Activated CD8-positive, alpha-beta T cell treated with anti-CD3 and anti-CD28 coated beads for 36 hours (primary cell): ENCODE measurements at regions of chr15 and their contacts with region 1.

Region 1: GRCh38 chr15:89880721-89881120 is 13.1 kb downstream of the AP3S2 start:
- DNase-seq: no peak
- ATAC-seq: no peak
- H3K4me3 Mint-ChIP-seq: no peak overlapping the region
- H3K27ac Mint-ChIP-seq: peak overlapping the region; percentile 17
- H3K4me1 Mint-ChIP-seq: no peaks in the 10 kb centered on the region
- H3K27me3 Mint-ChIP-seq: no peaks in the 10 kb centered on the region
- CTCF ChIP-seq: no peak

Region 2: DNA sequence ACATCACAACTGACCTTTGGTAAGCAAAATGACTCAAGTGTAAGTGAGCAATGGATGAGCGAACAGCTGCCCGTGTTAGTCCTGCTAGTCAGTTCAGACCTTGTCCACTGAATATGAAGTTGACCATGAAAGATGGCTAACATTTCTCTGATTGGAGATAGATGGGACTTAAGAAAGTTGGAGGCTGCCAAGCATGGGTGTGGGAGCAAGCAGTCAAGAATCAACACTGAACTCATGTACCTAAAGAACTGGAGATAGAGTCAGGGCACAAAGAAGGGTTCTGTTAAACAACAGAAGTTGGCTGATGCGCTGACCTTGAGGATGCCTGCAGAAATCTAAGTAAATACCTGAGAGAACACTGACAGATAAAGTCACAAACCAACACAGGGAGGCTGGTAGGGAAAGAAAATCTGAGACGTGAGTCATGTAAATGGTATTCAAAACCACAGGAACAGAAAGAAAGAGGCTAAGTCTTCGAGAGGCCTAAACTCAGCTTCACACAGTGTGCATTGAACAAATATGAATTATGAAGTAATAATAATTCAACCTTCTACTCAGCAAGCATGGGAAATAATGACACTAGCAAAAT is 35.3 kb before region 1 on chr15:
- CTCF ChIA-PET with region 1: interaction called, 15 read pairs
- POLR2A ChIA-PET with region 1: no interaction called
- intact Hi-C with region 1: loop called (anchors 5 kb)
- DNase-seq: no peak
- ATAC-seq: no peak
- H3K4me3 Mint-ChIP-seq: no peak overlapping the region
- H3K27ac Mint-ChIP-seq: no peak overlapping the region
- H3K4me1 Mint-ChIP-seq: peaks cover 14% of the 10 kb centered on the region
- H3K27me3 Mint-ChIP-seq: no peaks in the 10 kb centered on the region
- CTCF ChIP-seq: no peak

Region 3: GRCh38 chr15:89899951-89900567 is 19.3 kb after region 1 on chr15:
- CTCF ChIA-PET with region 1: no interaction called
- POLR2A ChIA-PET with region 1: no interaction called
- intact Hi-C with region 1: no loop called
- DNase-seq: no peak
- ATAC-seq: no peak
- H3K4me3 Mint-ChIP-seq: no peak overlapping the region
- H3K27ac Mint-ChIP-seq: no peak overlapping the region
- H3K4me1 Mint-ChIP-seq: peaks cover 5% of the 10 kb centered on the region
- H3K27me3 Mint-ChIP-seq: no peaks in the 10 kb centered on the region
- CTCF ChIP-seq: no peak